ENCODE measurements at regions of chr18 and their contacts with region 1.

Region 1: DNA sequence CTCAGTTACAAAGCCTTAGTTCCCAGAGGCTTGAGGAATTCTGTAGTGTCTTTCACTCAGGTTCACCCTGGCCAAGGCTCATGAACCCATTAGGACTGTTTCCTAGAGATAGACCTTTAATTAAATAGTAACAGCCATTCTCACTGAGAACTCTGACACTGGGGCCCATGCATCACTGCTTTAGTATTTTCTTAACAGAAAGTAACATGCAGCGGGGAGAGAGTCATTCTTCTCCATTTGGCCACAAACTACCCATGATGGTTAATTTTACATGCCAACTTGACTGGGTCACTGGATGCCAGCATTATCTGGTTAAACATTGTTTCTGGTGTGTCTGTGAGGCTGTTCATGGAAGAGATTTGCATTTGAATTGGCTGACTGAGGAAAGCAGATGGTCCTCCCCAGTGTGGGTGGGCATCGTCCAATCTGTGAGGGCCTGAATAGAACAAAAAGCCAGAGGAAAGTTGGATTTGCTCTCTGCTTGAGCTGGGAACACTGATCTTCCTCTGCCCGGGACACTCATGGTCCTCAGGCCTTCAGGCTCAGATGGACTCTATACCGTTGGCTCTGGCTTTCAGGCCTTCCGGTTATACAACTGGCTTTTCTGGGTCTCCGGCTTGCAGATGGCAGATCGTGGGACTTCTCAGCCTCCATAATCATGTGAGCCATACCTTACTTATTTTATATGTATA is 5.6 kb upstream of the CPLX4 start:
- DNase-seq: no peak
- H3K4me3 ChIP-seq: no peak overlapping the region
- H3K27ac ChIP-seq: no peak overlapping the region
- H3K4me1 ChIP-seq: no peaks in the 10 kb centered on the region
- H3K27me3 ChIP-seq: no peaks in the 10 kb centered on the region
- CTCF ChIP-seq: no peak
- POLR2A ChIP-seq: no peak

Region 2: DNA sequence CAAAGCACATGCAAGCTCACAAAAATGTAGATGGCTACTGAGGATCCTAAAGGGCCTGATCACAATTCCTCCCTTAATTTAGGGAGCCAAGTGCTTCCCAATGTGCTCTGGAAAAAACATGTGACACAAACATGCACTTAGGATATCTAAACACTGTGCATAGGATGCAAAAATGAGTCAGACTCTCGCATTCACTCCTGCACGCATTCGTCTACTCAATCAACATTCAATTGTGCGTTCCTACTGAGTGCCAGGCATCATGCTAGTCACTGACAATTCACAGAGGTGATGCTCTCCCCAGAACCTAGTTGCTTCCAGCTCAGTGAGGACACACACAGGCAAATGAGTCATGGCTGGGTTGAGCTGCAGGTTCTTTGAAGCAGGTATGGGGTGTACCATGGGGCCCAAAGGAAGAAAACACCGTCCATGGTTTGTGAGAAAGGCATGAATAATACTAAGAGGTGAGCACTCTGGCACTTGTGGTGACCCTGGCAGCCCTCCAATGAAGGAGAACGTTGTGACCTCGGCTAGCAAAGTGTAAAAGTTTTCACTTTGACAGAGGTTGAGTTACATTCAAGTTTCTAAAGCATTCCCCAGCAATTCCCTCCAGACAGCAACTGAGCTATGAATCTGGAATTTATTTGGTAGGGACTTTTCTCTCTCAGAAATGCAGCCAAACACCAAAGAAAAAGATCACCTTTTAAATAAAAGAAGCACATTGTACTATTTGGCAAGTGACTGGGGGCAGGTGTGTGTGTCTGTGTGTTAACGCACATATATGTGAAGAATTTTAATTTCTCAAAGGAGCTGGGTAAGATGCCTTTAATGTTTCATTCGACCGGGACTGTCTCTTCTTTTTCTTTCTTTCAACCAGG is 868.5 kb before region 1 on chr18:
- intact Hi-C with region 1: loop called (anchors 10 kb)
- DNase-seq: no peak
- H3K4me3 ChIP-seq: no peak overlapping the region
- H3K27ac ChIP-seq: no peak overlapping the region
- H3K4me1 ChIP-seq: peaks cover 9% of the 10 kb centered on the region
- H3K27me3 ChIP-seq: no peaks in the 10 kb centered on the region
- CTCF ChIP-seq: no peak
- POLR2A ChIP-seq: no peak

Region 3: GRCh38 chr18:59265246-59265973 is 58.7 kb before region 1 on chr18:
- intact Hi-C with region 1: no loop called
- DNase-seq: no peak
- H3K4me3 ChIP-seq: peak overlapping the region in 1 of 2 donors; percentile 13
- H3K27ac ChIP-seq: no peak overlapping the region
- H3K4me1 ChIP-seq: peaks cover 20% of the 10 kb centered on the region
- H3K27me3 ChIP-seq: peaks cover 25% of the 10 kb centered on the region
- CTCF ChIP-seq: no peak
- POLR2A ChIP-seq: no peak

Region 4: DNA sequence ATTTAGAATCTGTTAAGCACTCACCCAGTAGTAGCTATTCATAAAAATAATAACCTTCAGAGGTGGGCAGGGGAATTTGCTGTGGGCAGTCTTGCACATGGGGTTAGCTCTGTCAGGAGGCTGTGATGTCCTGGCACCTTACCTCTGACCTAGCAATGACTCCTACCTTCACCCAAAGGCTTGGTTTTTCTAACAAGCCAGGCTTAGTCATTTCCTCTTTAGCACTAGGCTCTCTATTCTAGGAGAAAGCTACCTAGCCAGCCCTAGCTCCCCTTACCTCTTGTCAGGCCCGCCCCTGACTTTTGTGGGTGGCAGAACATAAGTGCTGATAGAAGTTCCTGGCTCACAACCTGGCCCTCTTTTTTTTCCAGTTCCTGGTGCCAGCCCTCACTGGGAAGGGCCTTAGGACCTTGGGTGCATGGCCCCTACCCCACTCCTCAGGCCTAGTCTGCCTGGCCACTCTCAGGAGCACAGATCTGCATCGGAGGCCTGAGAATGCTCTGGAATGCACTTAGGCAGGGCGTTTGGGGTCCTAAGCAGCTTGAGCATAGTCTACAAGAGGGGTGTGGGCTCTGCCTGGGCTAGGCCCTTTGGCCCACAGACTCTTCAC is 23.3 kb before region 1 on chr18:
- intact Hi-C with region 1: no loop called
- DNase-seq: no peak
- H3K4me3 ChIP-seq: no peak overlapping the region
- H3K27ac ChIP-seq: no peak overlapping the region
- H3K4me1 ChIP-seq: no peaks in the 10 kb centered on the region
- H3K27me3 ChIP-seq: no peaks in the 10 kb centered on the region
- CTCF ChIP-seq: no peak
- POLR2A ChIP-seq: no peak

Region 5: DNA sequence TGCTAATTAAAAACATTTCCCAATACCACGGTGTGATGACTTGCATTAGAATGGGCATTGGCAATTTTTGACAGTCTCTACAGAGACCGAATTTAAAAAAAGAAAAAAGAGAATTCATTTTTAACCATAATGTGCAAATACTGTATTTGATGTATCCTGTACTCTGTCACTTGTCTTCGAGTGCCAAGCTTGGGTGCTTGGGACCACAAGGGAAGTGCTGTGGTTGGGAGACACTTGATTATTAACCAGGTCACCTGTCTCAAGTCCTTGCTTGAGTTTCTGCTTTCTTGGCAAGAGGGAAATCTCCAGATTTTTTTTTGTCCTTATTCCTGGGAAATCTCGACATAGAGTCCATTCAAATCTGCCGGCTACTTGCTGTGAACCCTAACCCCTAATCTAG is 839.5 kb after region 1 on chr18:
- intact Hi-C with region 1: no loop called
- DNase-seq: no peak
- H3K4me3 ChIP-seq: no peak overlapping the region
- H3K27ac ChIP-seq: no peak overlapping the region
- H3K4me1 ChIP-seq: no peaks in the 10 kb centered on the region
- H3K27me3 ChIP-seq: no peaks in the 10 kb centered on the region
- CTCF ChIP-seq: no peak
- POLR2A ChIP-seq: no peak

Measured in vagina (tissue), 2 donors.